ENCODE measurements at regions of chr19 and their contacts with region 1.

Region 1: GRCh38 chr19:11738746-11739620 is at the start of gene ZNF823:
- DNase-seq: peak; percentile 99 to 100
- H3K4me3 ChIP-seq: peak within 1 kb of the TSS; percentile 82 to 83
- H3K27ac ChIP-seq: peak within 1 kb of the TSS; percentile 88 to 92
- H3K4me1 ChIP-seq: peaks cover 0 to 25% (median 8%) of the 10 kb centered on the region in 4 donors
- H3K27me3 ChIP-seq: no peaks in the 10 kb centered on the region
- CTCF ChIP-seq: no peak

Region 2: DNA sequence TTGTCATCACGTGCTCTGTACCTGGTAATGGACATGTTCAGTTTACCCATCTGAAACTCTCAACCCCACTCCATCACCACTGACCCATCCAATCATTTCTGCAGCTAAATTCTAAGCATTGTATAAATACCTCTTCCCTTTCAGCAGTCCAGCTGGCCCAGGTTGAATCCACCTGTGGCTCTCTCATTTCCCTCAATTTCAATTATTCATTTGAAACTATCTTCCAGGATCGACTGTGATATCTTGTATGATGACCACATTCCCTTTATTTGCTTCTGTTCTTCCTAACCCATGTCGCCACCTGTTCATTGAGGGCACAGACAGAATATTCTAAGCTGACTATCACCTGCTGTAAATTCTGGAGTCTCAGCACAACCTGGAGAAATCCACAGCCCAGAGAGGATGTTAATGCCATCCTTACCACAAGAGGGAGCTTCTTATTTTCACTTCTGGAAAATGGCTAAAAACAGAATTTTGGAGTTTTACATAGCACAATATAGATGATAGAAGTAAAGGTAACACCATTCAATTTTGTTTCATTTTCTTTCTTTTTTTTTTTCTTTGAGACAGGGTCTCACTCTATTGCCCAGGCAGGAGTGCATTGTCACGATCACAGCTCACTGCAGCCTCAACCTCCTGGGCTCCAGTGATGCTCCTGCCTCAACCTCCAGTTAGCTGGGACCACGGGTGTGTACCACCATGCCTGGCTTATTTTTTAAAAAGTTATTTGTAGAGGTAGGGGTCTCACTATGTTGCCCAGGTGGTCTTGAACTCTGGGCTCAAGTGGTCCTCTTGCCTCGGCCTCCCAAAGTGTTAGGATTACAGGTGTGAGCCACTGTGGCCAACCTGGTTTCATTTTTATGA is 38.8 kb before region 1 on chr19:
- intact Hi-C with region 1: no loop called
- DNase-seq: no peak
- H3K4me3 ChIP-seq: no peak overlapping the region
- H3K27ac ChIP-seq: no peak overlapping the region
- H3K4me1 ChIP-seq: peaks cover 0 to 3% (median 2%) of the 10 kb centered on the region in 4 donors
- H3K27me3 ChIP-seq: no peaks in the 10 kb centered on the region
- CTCF ChIP-seq: peak; percentile 53 to 62

Region 3: DNA sequence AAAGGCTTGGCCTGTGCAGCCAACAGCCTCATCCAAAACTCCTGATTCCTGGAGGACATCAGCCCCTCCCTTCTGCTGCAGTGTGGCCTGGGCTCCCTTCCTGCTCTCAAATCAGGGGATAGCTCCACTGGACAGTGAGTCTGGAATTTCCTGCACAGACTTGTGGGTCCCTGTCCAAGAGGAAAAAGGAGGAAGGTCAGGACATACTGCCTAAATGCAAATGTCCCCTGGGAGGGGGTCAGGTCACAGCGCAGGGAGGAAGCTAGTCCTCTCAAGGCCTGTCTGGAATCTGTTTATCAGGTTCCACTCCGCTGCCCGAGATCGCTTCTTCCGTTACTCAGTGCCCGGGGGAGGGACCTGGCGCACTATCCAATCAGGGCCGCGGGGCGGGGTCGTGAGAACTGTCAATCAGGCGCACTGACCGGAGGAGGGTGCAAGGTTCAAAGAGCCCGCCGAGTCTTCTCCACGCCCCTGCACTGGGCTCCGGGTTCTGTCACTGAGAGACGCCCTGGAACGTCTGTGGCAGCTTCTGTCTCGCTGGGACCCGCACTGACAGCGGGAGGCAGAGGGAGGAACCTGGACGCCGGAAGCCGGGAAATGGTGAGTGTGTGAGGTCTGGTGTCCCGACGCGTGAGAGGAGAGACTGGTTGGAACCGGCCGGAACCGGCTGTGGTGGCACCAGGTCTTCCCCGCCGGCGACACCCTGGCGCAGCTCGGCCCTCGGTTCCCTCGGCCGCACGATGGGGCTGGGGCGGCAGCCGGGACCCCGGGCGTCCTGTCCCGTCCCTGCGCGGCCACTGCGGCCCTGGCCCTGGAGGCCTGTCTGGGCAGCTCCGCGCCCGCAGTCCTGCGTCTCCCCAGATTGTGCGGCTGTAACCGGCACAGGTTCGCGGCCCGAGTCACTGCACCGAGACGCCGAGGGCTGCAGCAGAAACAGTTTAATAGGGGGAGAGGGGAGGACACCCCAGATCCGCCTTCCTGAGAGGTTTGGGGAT is 27.9 kb after region 1 on chr19 and contains the start of gene ZNF441:
- intact Hi-C with region 1: loop called (anchors 1 kb)
- DNase-seq: peak; percentile 99
- H3K4me3 ChIP-seq: peak within 1 kb of the TSS; percentile 82 to 85
- H3K27ac ChIP-seq: peak within 1 kb of the TSS; percentile 97
- H3K4me1 ChIP-seq: peaks cover 0 to 18% (median 14%) of the 10 kb centered on the region in 4 donors
- H3K27me3 ChIP-seq: no peaks in the 10 kb centered on the region
- CTCF ChIP-seq: no peak

Region 4: DNA sequence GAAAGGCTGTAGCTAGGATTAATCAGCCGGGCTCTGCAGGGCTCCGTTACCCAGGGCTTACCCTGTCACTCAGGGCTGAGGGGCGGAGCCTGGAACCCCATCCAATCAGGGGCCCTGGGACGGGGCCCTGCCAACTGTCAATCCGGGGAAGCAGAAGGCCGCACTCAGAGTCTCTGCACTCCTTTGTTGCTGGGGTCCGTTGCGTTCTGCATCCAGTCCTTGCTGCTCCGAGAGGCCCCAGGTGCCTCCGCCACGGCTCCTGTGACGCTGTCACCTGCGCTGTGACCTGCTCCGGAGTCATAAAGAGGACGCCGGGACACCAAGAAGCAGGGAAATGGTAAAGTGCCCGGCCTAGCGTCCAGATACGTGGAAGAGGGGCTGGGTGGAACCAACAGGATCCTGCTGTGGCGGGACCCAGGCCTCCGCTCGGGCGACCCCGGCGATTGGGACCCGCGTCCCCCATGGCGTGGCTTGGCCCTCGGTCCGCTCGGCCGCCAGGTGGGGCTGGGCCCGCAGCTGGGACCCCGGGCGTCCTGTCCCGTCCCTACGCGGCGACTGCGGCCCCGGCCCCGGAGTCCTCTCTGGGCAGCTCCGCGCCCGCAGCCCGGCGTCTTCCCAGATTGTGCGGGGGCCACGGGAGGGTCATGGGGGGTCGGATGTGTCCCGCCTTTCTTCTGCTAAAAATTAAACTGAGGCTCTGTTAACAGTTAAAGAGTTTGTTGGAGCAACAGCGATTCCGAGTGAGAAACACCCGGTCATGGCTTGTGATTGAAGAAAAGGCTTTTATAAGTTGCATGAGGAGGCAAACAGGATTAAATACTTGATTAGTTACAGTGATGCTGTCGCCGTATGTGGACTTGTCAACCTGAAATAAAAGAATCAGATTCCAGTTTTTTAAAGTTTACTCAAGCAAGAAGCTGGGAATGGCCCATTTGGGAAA is 59.7 kb after region 1 on chr19 and contains the start of gene ZNF491:
- intact Hi-C with region 1: no loop called
- DNase-seq: peak; percentile 95 to 96
- H3K4me3 ChIP-seq: peak within 1 kb of the TSS; percentile 65 to 82
- H3K27ac ChIP-seq: peak within 1 kb of the TSS; percentile 80 to 84
- H3K4me1 ChIP-seq: peaks cover 0 to 20% (median 13%) of the 10 kb centered on the region in 4 donors
- H3K27me3 ChIP-seq: no peaks in the 10 kb centered on the region
- CTCF ChIP-seq: peak in 1 of 2 experiments; percentile 15